Activated CD4-positive, alpha-beta T cell treated with anti-CD3 and anti-CD28 coated beads, Interleukin-2, amount 10 ng/mL, durations not matched to agents 24 days and 14 days (primary cell): ENCODE measurements at regions of chr12 and their contacts with region 1.

Region 1: GRCh38 chr12:121060149-121061001 is 21.3 kb upstream of the OASL start:
- DNase-seq: peak; percentile 91
- H3K4me3 Mint-ChIP-seq: peak overlapping the region; percentile 81
- H3K27ac Mint-ChIP-seq: peak overlapping the region; percentile 90
- H3K4me1 Mint-ChIP-seq: peaks cover 17% of the 10 kb centered on the region
- H3K27me3 Mint-ChIP-seq: peaks cover 2% of the 10 kb centered on the region

Region 2: GRCh38 chr12:121033625-121034349 is 26.6 kb before region 1 on chr12:
- intact Hi-C with region 1: loop called (anchors 1 kb)
- DNase-seq: peak; percentile 79
- H3K4me3 Mint-ChIP-seq: peak overlapping the region; percentile 60
- H3K27ac Mint-ChIP-seq: peak overlapping the region; percentile 80
- H3K4me1 Mint-ChIP-seq: peaks cover 52% of the 10 kb centered on the region
- H3K27me3 Mint-ChIP-seq: no peaks in the 10 kb centered on the region

Region 3: GRCh38 chr12:121048442-121048841 is 11.9 kb before region 1 on chr12:
- intact Hi-C with region 1: no loop called
- DNase-seq: no peak
- H3K4me3 Mint-ChIP-seq: peak overlapping the region; percentile 72
- H3K27ac Mint-ChIP-seq: peak overlapping the region; percentile 67
- H3K4me1 Mint-ChIP-seq: peaks cover 13% of the 10 kb centered on the region
- H3K27me3 Mint-ChIP-seq: peaks cover 23% of the 10 kb centered on the region

Region 4: GRCh38 chr12:121095544-121096198 is 35.3 kb after region 1 on chr12:
- intact Hi-C with region 1: loop called (anchors 1 kb)
- DNase-seq: peak; percentile 94
- H3K4me3 Mint-ChIP-seq: peak overlapping the region; percentile 87
- H3K27ac Mint-ChIP-seq: peak overlapping the region; percentile 81
- H3K4me1 Mint-ChIP-seq: peaks cover 32% of the 10 kb centered on the region
- H3K27me3 Mint-ChIP-seq: peaks cover 14% of the 10 kb centered on the region

Region 5: GRCh38 chr12:121223292-121224285 is 163.2 kb after region 1 on chr12:
- intact Hi-C with region 1: loop called (anchors 5 kb)
- DNase-seq: peak; percentile 84
- H3K4me3 Mint-ChIP-seq: peak overlapping the region; percentile 52
- H3K27ac Mint-ChIP-seq: peak overlapping the region; percentile 88
- H3K4me1 Mint-ChIP-seq: peaks cover 43% of the 10 kb centered on the region
- H3K27me3 Mint-ChIP-seq: no peaks in the 10 kb centered on the region